ENCODE measurements at regions of chr6 and their contacts with region 1.

Region 1: GRCh38 chr6:26596579-26597388 is at the start of gene ABT1:
- DNase-seq: peak; percentile 96
- ATAC-seq: peak; percentile 88
- H3K4me3 ChIP-seq: peak within 1 kb of the TSS; percentile 93
- H3K27ac ChIP-seq: peak within 1 kb of the TSS; percentile 85
- H3K4me1 ChIP-seq: peaks cover 18% of the 10 kb centered on the region
- H3K27me3 ChIP-seq: no peaks in the 10 kb centered on the region
- CTCF ChIP-seq: no peak
- EP300 ChIP-seq: no peak
- POLR2A ChIP-seq: peak; percentile 97
- RAD21 ChIP-seq: no peak
- polyA plus RNA-seq, gene ABT1: 8.4 to 11.3 TPM

Region 2: DNA sequence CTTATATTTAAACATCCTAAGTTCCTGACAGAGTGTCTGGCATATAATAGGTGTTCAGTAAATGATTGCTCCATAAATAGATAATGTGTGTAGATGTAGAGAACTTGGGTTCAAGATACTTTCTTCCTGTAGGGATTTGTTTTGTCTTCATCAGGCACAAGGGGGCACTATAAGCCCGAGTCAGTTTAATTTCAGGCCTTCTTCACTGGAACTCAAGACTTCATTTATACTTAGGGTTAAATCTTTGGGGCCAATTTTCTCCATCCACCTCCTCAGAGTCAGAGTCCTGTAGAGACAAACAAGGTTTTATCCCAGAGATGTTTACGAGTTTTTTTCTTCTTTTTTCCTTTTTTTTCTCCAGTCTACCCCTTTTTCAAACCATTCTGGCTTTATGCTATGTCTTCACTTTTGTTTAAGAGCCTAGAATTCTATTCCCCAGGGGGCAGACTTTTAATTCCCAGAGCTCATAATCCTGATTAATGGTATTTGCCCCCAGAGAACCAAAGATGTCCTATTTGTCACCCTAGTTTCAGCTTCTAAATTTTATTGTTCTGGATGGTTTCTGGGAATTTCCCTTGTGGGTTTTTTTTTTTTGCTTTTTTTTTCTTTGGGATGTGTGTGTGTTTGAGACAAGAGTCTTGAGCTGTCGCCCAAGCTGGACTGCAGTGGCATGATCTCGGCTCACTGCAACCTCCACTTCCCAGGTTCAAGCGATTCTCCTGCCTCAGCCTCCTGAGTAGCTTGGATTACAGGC is 421.2 kb before region 1 on chr6:
- CTCF ChIA-PET with region 1: interaction called, 7 read pairs
- POLR2A ChIA-PET with region 1: interaction called, 8 read pairs
- RAD21 ChIA-PET with region 1: interaction called, 5 read pairs
- SMC1A ChIA-PET with region 1: interaction called, 4 read pairs
- in situ Hi-C with region 1: no loop called
- intact Hi-C with region 1: loop called (anchors 10 kb)
- DNase-seq: no peak
- ATAC-seq: peak; percentile 28
- H3K4me3 ChIP-seq: peak overlapping the region; percentile 9; the same call in 1 of the 2 replicates
- H3K27ac ChIP-seq: peak overlapping the region; percentile 27
- H3K4me1 ChIP-seq: peaks cover 27% of the 10 kb centered on the region
- H3K27me3 ChIP-seq: no peaks in the 10 kb centered on the region
- CTCF ChIP-seq: peak; percentile 56 to 77 (median 64); a peak in 5 of 6 replicates
- EP300 ChIP-seq: no peak
- POLR2A ChIP-seq: no peak
- RAD21 ChIP-seq: peak; percentile 91

Region 3: DNA sequence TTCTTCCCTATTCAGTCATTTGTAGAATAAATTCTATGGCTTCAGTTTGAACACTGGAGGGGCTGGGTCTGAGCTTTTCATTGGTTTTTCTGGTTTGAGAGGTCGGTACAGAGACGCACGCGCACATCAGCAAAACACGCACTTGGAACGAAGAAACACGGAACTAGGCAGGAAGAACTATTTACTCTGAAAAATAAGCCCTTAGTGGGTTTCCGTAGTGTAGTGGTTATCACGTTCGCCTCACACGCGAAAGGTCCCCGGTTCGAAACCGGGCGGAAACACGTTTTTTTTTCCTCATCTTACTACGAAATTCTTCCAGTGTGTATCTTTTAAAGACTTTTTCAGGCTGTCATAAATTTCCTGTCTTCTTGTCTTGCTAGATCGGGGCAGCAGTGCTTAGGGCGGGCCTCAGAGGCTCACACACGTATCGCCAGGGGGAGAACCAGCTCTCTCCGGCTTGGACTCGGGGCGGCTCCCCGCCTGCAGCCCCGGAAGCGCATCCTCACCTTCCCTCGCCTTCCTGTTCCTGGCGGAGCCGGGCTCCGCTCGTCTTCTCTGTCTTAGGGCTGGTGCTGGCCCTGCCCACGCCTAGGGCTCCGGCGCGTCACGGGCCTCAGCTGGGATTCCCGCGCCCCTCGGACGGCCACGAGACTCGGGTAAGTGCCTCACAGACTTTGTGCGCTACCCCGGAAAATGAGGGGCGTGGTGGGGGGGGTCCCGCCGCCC is 58.8 kb before region 1 on chr6 and contains the start of gene HMGN4:
- CTCF ChIA-PET with region 1: interaction called, 5 read pairs
- POLR2A ChIA-PET with region 1: no interaction called
- RAD21 ChIA-PET with region 1: interaction called, 4 read pairs
- SMC1A ChIA-PET with region 1: no interaction called
- in situ Hi-C with region 1: no loop called
- intact Hi-C with region 1: loop called (anchors 2 kb)
- DNase-seq: peak; percentile 96
- ATAC-seq: peak; percentile 81
- H3K4me3 ChIP-seq: peak within 1 kb of the TSS; percentile 86
- H3K27ac ChIP-seq: peak within 1 kb of the TSS; percentile 99
- H3K4me1 ChIP-seq: peaks cover 14% of the 10 kb centered on the region
- H3K27me3 ChIP-seq: no peaks in the 10 kb centered on the region
- CTCF ChIP-seq: 0 out of 6 replicates have a peak, but pooled peaks of 1 of the 3 experiments have one; percentile 8
- EP300 ChIP-seq: peak in 1 of 2 experiments; percentile 74; a peak in 1 of 4 replicates
- POLR2A ChIP-seq: peak; percentile 84
- RAD21 ChIP-seq: no peak
- polyA plus RNA-seq, gene HMGN4: 26.7 to 31.2 TPM

Region 4: GRCh38 chr6:26581164-26581915 is 15.4 kb before region 1 on chr6:
- CTCF ChIA-PET with region 1: interaction called, 267 read pairs
- POLR2A ChIA-PET with region 1: interaction called, 8 read pairs
- RAD21 ChIA-PET with region 1: interaction called, 64 read pairs
- SMC1A ChIA-PET with region 1: interaction called, 170 read pairs
- in situ Hi-C with region 1: no loop called
- intact Hi-C with region 1: no loop called
- DNase-seq: no peak
- ATAC-seq: no peak
- H3K4me3 ChIP-seq: no peak overlapping the region
- H3K27ac ChIP-seq: no peak overlapping the region
- H3K4me1 ChIP-seq: no peaks in the 10 kb centered on the region; the same call in 1 of the 2 replicates
- H3K27me3 ChIP-seq: no peaks in the 10 kb centered on the region
- CTCF ChIP-seq: no peak
- EP300 ChIP-seq: no peak
- POLR2A ChIP-seq: no peak
- RAD21 ChIP-seq: no peak

Region 5: DNA sequence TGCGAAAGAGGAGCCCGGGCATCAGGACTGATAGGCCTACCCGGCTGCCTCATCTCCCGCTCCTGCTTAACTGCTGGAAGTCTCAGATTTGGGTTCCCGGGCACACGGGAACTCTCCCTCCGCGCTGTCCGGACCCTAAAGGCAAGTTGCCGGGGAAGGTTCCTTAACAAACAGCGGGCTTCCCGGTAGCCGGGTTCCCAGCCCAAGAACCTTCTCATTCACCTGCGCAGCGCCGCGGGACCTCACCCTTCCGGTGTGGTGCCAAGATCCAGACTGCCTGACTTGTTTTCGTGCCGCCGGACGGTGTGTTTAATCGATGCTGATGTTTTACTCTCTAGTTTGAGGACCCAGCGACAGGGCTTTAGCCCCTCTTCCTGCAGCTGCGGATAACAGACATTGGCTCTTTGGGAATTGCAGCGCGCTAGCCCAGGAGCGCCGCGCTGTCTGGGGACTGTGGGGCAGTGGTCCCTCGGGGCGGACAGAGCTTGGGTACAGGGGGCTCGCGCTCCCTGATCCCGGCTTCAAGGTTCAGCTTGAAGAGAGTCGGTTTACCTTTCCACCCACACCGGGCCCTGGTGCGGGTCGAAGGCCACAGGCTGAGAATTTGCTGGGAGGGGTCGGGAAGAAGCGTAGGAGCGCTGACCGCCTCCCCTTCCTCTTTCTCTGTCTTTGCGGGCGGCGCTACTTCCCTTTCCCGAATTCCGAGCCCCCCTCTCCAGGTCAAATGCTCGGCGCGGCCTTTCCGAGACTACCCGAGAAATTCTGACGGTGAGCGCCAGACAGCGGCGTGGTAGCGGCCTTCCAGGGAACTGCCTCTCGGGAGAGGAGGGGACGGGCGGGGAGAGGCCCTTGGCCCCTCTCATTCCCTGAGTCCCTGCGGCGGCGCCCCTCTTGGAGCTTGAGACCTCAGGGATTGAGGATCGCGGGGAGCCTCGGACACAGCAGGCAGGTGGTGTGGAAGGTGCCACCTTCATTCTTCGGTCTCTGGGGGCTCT is 17.2 kb after region 1 on chr6:
- CTCF ChIA-PET with region 1: no interaction called
- POLR2A ChIA-PET with region 1: no interaction called
- RAD21 ChIA-PET with region 1: no interaction called
- SMC1A ChIA-PET with region 1: no interaction called
- in situ Hi-C with region 1: no loop called
- intact Hi-C with region 1: no loop called
- DNase-seq: no peak
- ATAC-seq: peak; percentile 46
- H3K4me3 ChIP-seq: 0 out of 2 replicates have a peak overlapping the region, but pooled peaks have one; percentile 16
- H3K27ac ChIP-seq: no peak overlapping the region
- H3K4me1 ChIP-seq: no peaks in the 10 kb centered on the region
- H3K27me3 ChIP-seq: peaks cover 0 to 5% of the 10 kb centered on the region in 2 experiments; a peak in 2 of 4 replicates
- CTCF ChIP-seq: no peak
- EP300 ChIP-seq: no peak
- POLR2A ChIP-seq: no peak
- RAD21 ChIP-seq: no peak